ENCODE measurements at regions of chrX and their contacts with region 1.

Region 1: GRCh38 chrX:101390664-101391525 is at the start of gene RPL36A:
- DNase-seq: peak; percentile 93 to 96
- H3K4me3 ChIP-seq: peak within 1 kb of the TSS; percentile 75
- H3K4me1 ChIP-seq: peaks cover 21% of the 10 kb centered on the region
- H3K27me3 ChIP-seq: no peaks in the 10 kb centered on the region; the same call in 1 of the 2 replicates

Region 2: GRCh38 chrX:101276238-101276637 is 114.7 kb before region 1 on chrX:
- in situ Hi-C with region 1: no loop called
- DNase-seq: no peak
- H3K4me3 ChIP-seq: no peak overlapping the region
- H3K4me1 ChIP-seq: no peaks in the 10 kb centered on the region
- H3K27me3 ChIP-seq: no peaks in the 10 kb centered on the region

Region 3: GRCh38 chrX:101348452-101349192 is 42.3 kb before region 1 on chrX and contains the start of gene TIMM8A:
- in situ Hi-C with region 1: loop called (anchors 5 kb)
- DNase-seq: peak; percentile 89 to 91
- H3K4me3 ChIP-seq: peak within 1 kb of the TSS; percentile 82
- H3K4me1 ChIP-seq: peaks cover 21% of the 10 kb centered on the region
- H3K27me3 ChIP-seq: no peaks in the 10 kb centered on the region

Region 4: GRCh38 chrX:101785142-101785541 is 394.2 kb after region 1 on chrX:
- in situ Hi-C with region 1: no loop called
- DNase-seq: no peak
- H3K4me3 ChIP-seq: no peak overlapping the region
- H3K4me1 ChIP-seq: no peaks in the 10 kb centered on the region
- H3K27me3 ChIP-seq: peaks cover 3% of the 10 kb centered on the region; the same call in 1 of the 2 replicates